AG04450 (cell line): ENCODE measurements at regions of chr5 and their contacts with region 1.

Region 1: DNA sequence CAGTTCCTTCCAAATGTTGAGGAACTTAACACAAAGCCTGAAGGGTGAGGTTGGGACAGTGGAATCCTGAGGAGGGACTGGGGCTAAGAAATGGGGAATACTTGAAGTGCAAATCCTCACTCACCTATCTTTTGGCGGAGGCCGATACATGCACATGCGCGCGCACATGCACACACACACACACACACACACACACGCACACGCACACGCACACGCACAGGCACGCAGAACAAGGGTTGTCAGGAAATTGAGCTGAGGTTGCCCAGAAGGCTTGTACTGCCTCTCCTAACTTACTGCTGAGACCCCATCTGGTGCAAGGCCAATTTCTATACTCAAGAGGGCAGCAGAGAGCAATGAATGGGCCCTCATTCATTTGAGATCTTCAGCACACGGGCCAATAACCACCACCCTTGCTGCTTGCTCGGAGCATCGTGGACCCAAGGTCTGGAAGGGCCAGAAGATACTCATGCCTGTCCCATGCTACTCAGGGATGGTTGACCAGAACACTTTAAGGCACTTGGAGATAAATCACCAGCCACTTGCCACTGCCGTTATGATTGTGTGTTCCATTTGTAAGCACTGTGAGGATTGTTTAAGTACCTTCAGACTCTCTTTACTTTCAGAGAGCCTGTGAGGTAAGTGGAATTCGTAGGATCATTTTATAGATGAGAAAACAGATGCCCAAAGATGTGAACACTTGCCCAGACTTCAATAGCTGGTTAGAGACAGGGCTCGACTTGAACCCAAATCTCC is 21.5 kb downstream of the BTF3 start:
- DNase-seq: peak; percentile 56
- H3K4me3 ChIP-seq: no peak overlapping the region
- H3K27ac ChIP-seq: no peak overlapping the region
- H3K27me3 ChIP-seq: no peaks in the 10 kb centered on the region
- CTCF ChIP-seq: peak; percentile 89

Region 2: DNA sequence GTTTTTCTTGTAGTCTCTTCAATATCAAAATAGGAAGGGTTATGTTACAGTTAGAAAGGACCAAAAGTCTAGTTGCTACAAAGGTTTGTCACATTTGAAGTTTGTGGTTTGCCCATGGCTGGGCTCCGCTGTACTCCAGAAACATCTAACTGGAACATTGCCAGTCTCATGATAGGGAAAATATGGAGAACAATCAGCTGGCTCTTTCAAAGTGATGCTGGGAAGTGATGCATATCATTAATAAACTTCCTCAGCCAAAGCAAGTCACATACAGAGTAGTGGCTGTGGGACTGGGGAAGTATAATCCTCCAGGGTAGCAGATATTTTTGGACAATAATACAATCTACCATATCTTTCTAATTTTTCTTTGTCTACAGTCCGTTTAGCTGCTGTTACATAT is 12.6 kb before region 1 on chr5:
- CTCF ChIA-PET with region 1: interaction called, 11 read pairs
- POLR2A ChIA-PET with region 1: no interaction called
- DNase-seq: no peak
- H3K4me3 ChIP-seq: no peak overlapping the region
- H3K27ac ChIP-seq: no peak overlapping the region
- H3K27me3 ChIP-seq: no peaks in the 10 kb centered on the region
- CTCF ChIP-seq: no peak

Region 3: DNA sequence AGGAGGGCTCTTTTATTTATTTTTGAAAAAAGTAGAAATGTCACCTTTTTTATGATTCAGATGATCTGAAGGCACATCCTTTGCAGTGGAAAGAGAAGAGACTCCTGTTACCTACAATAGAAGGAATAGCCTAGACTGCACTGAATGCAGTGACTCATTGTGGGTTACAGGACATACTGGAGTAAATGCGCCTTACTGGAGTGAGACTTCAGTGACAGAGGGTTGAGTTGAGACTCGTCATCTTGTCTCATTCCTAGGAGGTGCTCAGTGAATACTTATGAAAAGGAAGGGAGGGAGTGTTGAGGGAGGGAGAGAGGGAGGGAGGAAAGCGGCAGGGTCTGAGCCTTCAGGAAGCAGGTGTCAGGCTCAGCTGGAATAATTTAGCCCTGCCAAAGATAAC is 20.5 kb after region 1 on chr5:
- CTCF ChIA-PET with region 1: interaction called, 110 read pairs
- POLR2A ChIA-PET with region 1: no interaction called
- DNase-seq: no peak
- H3K4me3 ChIP-seq: no peak overlapping the region
- H3K27ac ChIP-seq: no peak overlapping the region
- H3K27me3 ChIP-seq: no peaks in the 10 kb centered on the region
- CTCF ChIP-seq: no peak

Region 4: DNA sequence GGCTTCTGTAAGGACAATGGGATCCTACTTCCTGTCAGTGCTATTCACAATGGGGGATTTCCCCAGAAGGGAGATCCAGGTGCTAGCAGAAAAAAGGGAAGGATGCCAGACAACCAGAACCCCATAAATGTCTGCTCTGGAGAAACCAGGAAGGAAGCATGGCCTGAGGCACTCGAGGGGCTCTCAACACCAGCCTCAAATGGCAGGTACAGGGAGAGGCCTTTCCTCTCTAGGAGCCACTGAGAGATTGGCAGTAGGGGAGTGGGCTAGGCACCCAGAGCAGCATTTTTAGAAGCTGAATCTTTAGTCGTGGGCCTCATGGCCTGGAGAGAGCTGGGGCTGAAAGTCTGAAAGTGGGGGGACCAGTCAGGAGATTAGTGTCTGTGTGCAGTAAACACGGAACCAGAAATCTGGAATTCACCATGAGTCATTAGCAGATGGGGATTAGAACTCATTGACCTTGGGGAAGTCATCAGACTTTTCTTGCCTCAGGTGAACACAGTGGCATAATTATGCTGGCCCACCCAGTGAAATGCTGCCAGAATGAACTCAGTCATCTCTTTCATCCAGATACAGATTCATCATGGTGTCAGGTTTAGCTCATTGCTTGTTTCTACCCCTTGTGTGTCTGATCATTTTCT is 134.6 kb after region 1 on chr5:
- CTCF ChIA-PET with region 1: no interaction called
- POLR2A ChIA-PET with region 1: no interaction called
- DNase-seq: peak; percentile 26
- H3K4me3 ChIP-seq: no peak overlapping the region
- H3K27ac ChIP-seq: peak overlapping the region; percentile 80
- H3K27me3 ChIP-seq: no peaks in the 10 kb centered on the region
- CTCF ChIP-seq: no peak